Activated CD4-positive, alpha-beta memory T cell treated with anti-CD3 and anti-CD28 coated beads, Interleukin-2, amount 10 ng/mL, durations not matched to agents 7 days and 5 days (primary cell): ENCODE measurements at regions of chr6 and their contacts with region 1.

Region 1: GRCh38 chr6:166402582-166403277 is 20.0 kb upstream of the MPC1 start:
- DNase-seq: peak; percentile 7
- H3K4me3 Mint-ChIP-seq: no peak overlapping the region
- H3K27ac Mint-ChIP-seq: no peak overlapping the region
- H3K4me1 Mint-ChIP-seq: peaks cover 2% of the 10 kb centered on the region
- H3K27me3 Mint-ChIP-seq: peaks cover 5% of the 10 kb centered on the region

Region 2: GRCh38 chr6:165448210-165448609 is 954.5 kb before region 1 on chr6:
- CTCF ChIA-PET with region 1: no interaction called
- POLR2A ChIA-PET with region 1: no interaction called
- DNase-seq: no peak
- H3K4me3 Mint-ChIP-seq: no peak overlapping the region
- H3K27ac Mint-ChIP-seq: no peak overlapping the region
- H3K4me1 Mint-ChIP-seq: no peaks in the 10 kb centered on the region
- H3K27me3 Mint-ChIP-seq: no peaks in the 10 kb centered on the region

Region 3: DNA sequence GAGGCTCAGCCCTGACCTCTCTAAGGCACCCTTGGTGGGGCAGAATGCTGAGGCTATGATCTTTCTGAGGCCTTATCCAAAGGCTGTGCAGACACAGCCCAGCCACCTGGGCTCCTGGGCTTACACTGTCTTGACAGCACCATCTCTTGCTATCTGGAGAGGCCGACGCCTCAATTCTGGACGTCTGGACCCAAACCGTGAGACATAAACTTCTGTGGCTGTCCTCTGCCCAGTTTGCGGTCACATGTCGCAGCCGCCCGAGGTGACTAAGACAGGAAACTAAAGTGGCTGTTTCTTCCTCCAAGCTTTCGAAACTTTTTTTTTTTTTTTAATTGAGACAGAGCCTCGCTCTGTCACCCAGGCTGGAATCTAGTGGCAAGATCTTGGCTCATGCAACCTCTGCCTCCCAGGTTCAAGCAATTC is 143.9 kb before region 1 on chr6:
- CTCF ChIA-PET with region 1: interaction called, 11 read pairs
- POLR2A ChIA-PET with region 1: no interaction called
- DNase-seq: peak; percentile 65
- H3K4me3 Mint-ChIP-seq: peak overlapping the region; percentile 58
- H3K27ac Mint-ChIP-seq: peak overlapping the region; percentile 88
- H3K4me1 Mint-ChIP-seq: peaks cover 32% of the 10 kb centered on the region
- H3K27me3 Mint-ChIP-seq: peaks cover 36% of the 10 kb centered on the region

Region 4: GRCh38 chr6:166275714-166276166 is 127.0 kb before region 1 on chr6:
- CTCF ChIA-PET with region 1: interaction called, 33 read pairs
- POLR2A ChIA-PET with region 1: interaction called, 3 read pairs
- DNase-seq: peak; percentile 82
- H3K4me3 Mint-ChIP-seq: no peak overlapping the region
- H3K27ac Mint-ChIP-seq: no peak overlapping the region
- H3K4me1 Mint-ChIP-seq: peaks cover 6% of the 10 kb centered on the region
- H3K27me3 Mint-ChIP-seq: peaks cover 11% of the 10 kb centered on the region

Region 5: GRCh38 chr6:166281104-166281503 is 121.6 kb before region 1 on chr6:
- CTCF ChIA-PET with region 1: interaction called, 33 read pairs
- POLR2A ChIA-PET with region 1: interaction called, 3 read pairs
- DNase-seq: no peak
- H3K4me3 Mint-ChIP-seq: no peak overlapping the region
- H3K27ac Mint-ChIP-seq: no peak overlapping the region
- H3K4me1 Mint-ChIP-seq: no peaks in the 10 kb centered on the region
- H3K27me3 Mint-ChIP-seq: peaks cover 17% of the 10 kb centered on the region

Region 6: DNA sequence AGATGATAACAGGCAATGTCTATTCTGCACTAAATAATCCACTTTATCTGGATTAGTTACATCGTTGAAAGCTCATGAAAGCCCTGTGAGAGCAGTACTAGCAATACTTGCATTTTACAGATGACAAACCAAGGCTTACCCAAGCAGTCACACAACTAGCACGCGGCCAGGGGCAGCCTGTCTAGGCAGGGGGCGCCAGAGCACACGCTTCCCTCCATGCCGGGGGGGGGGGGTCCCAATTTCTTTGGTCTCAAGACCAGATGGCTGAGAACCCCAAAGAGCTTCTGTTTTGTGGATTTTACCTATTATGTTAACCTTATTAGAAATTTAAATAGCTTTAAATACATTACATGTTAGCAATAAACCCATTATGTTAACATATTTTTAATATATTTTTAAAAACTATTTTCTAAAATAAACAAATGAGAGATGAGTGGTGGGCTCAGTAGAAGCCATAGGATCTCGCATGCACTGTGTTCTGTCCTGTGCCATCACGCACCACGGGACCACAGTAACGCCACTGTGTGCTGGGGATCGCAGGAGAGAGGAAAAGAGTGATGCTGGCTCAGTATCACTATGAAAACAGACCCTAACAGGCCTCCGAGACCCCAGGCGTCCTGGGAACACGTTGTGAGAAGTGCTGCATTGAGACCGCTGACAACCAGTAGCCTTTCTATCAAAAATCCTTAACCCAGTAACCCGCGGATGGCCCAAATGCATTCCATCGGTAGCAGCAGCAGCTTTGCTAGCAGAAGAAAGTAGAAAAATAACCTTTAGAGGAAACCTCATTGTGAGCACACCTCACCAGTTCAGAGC is 89.3 kb before region 1 on chr6:
- CTCF ChIA-PET with region 1: interaction called, 69 read pairs
- POLR2A ChIA-PET with region 1: no interaction called
- DNase-seq: peak; percentile 58
- H3K4me3 Mint-ChIP-seq: no peak overlapping the region
- H3K27ac Mint-ChIP-seq: no peak overlapping the region
- H3K4me1 Mint-ChIP-seq: peaks cover 3% of the 10 kb centered on the region
- H3K27me3 Mint-ChIP-seq: peaks cover 21% of the 10 kb centered on the region

Region 7: GRCh38 chr6:166387642-166388289 is 15.0 kb before region 1 on chr6:
- CTCF ChIA-PET with region 1: interaction called, 10 read pairs
- POLR2A ChIA-PET with region 1: interaction called, 3 read pairs
- DNase-seq: no peak
- H3K4me3 Mint-ChIP-seq: no peak overlapping the region
- H3K27ac Mint-ChIP-seq: no peak overlapping the region
- H3K4me1 Mint-ChIP-seq: peaks cover 8% of the 10 kb centered on the region
- H3K27me3 Mint-ChIP-seq: peaks cover 8% of the 10 kb centered on the region

Region 8: DNA sequence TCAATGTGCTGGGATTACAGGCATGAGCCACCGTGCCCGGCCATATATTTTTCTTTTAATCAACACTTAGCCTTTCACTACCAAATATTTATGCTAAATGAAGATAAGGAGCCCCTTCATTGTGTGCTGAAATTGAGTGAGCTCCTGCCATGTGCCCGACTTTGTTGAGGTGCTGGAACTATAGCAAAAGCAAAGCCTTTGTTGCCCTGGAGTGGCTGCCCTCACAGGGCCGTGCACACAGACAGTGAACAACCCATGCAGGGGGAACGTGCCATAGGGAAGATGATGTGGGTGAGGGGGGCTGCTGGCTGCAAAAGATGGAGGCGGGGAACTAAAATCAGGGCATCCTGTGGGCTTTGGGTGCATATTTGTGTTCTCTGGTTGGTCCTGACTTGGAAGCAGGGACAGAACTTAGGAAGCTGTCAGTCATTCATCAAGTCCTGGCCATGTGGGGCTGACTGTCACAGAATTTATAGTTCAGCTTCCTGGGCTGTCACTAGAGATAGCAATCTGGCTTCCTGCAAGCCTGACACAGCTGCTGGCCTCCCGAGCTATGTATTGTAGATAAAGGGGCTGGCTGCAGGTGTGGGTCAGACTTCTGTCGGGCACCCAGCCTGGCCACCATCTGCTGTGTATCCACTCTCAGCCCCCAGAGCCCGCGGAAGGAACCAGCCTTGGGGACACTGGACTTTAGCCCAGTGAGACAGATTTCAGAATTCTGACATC is 36.8 kb after region 1 on chr6:
- CTCF ChIA-PET with region 1: interaction called, 10 read pairs
- POLR2A ChIA-PET with region 1: no interaction called
- DNase-seq: no peak
- H3K4me3 Mint-ChIP-seq: no peak overlapping the region
- H3K27ac Mint-ChIP-seq: no peak overlapping the region
- H3K4me1 Mint-ChIP-seq: peaks cover 16% of the 10 kb centered on the region
- H3K27me3 Mint-ChIP-seq: peaks cover 2% of the 10 kb centered on the region

Region 9: GRCh38 chr6:166671434-166672081 is 268.8 kb after region 1 on chr6:
- CTCF ChIA-PET with region 1: no interaction called
- POLR2A ChIA-PET with region 1: no interaction called
- DNase-seq: no peak
- H3K4me3 Mint-ChIP-seq: no peak overlapping the region
- H3K27ac Mint-ChIP-seq: no peak overlapping the region
- H3K4me1 Mint-ChIP-seq: no peaks in the 10 kb centered on the region
- H3K27me3 Mint-ChIP-seq: peaks cover 15% of the 10 kb centered on the region